Transverse colon (tissue), 4 donors: ENCODE measurements at regions of chr17 and their contacts with region 1.

Region 1: GRCh38 chr17:50573866-50574611 is 13.5 kb downstream of the CACNA1G start:
- DNase-seq: no peak
- H3K4me3 ChIP-seq: no peak overlapping the region
- H3K27ac ChIP-seq: no peak overlapping the region
- H3K4me1 ChIP-seq: no peaks in the 10 kb centered on the region
- H3K27me3 ChIP-seq: no peaks in the 10 kb centered on the region
- CTCF ChIP-seq: no peak
- EP300 ChIP-seq: no peak
- POLR2A ChIP-seq: no peak

Region 2: DNA sequence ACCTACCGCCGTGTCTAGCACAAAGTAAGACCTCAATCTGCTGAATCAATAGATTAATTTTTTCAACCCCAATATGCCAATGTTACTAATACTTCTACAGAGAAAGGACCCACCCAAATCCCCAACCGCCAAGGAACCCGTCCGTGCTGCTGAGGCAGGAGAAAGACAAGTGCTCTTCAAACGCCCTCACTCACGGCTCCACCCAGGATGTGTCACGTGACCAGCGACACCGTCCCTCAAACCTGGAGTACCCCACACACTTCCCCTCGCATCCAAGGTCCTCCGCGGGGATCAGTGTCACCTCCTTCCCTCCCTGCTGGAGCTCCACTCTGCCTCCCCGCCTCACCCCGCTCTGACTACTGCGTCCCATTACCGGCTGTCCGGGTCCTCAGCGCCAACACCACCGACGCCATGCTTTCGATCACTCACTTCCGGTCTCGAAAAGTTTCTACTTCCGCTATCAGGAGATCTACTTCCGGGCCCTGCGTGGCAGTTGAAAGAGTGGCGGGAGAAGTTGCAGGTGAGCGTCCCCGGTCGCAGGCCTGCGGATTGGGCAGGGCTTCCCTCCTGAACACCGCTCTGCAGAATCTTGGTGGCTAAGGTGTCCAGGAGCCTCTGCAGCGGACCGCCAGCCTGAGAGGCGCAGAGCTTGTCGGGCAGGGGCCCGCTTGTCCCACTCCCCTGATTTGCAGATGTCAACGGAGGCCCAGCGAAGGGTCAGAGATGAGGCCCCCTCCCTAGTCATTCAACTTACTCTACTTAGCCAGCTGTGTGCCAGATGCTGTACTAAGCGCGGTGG is 201.1 kb before region 1 on chr17 and contains the starts of genes EME1 and MRPL27:
- in situ Hi-C with region 1: no loop called
- intact Hi-C with region 1: no loop called
- DNase-seq: peak; percentile 88
- H3K4me3 ChIP-seq: peak within 1 kb of the TSS; percentile 61 to 81 (median 70)
- H3K27ac ChIP-seq: peak within 1 kb of the TSS; percentile 87 to 97 (median 90)
- H3K4me1 ChIP-seq: peaks cover 11 to 23% (median 19%) of the 10 kb centered on the region in 4 donors
- H3K27me3 ChIP-seq: no peaks in the 10 kb centered on the region
- CTCF ChIP-seq: no peak
- EP300 ChIP-seq: no peak
- POLR2A ChIP-seq: peak; percentile 61
- total RNA-seq, gene EME1: 1.4 to 1.6 TPM in 2 of 4 donors, not detected in the others
- total RNA-seq, gene MRPL27: 4.9 to 97.5 (median 46.9) TPM

Region 3: DNA sequence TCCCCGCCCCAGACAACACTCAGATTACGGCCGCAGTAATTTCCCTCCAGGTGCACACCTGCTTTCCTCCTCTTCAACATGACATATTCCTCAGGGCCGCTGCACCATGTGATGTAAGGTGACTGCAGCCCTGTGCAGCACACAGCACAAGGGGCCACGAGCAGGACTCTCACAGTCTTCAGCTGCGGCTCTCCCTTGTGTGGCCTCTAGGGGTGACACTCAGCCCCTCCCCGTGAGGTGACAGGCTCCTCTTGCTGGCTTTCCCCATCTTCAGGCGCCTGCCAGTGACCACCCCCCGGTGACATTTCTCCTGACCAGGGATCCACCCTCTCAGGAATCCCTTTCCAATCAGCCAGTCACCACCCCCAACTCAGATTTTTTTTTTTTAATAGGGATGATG is 29.3 kb after region 1 on chr17:
- in situ Hi-C with region 1: no loop called
- intact Hi-C with region 1: loop called (anchors 2 kb)
- DNase-seq: no peak
- H3K4me3 ChIP-seq: no peak overlapping the region
- H3K27ac ChIP-seq: no peak overlapping the region
- H3K4me1 ChIP-seq: peaks cover 5 to 11% (median 6%) of the 10 kb centered on the region in 4 donors
- H3K27me3 ChIP-seq: no peaks in the 10 kb centered on the region
- CTCF ChIP-seq: peak in 2 of 5 experiments; percentile 10 to 14
- EP300 ChIP-seq: no peak
- POLR2A ChIP-seq: no peak